Mammary epithelial cell (primary cell): ENCODE measurements at regions of chr3 and their contacts with region 1.

Region 1: GRCh38 chr3:29285471-29286071 is 4.7 kb downstream of the RBMS3 start:
- DNase-seq: peak; percentile 76
- H3K4me3 ChIP-seq: peak overlapping the region; percentile 40 to 53 (median 52)
- H3K27ac ChIP-seq: peak overlapping the region; percentile 93
- H3K4me1 ChIP-seq: peaks cover 13% of the 10 kb centered on the region
- H3K27me3 ChIP-seq: no peaks in the 10 kb centered on the region
- CTCF ChIP-seq: no peak

Region 2: DNA sequence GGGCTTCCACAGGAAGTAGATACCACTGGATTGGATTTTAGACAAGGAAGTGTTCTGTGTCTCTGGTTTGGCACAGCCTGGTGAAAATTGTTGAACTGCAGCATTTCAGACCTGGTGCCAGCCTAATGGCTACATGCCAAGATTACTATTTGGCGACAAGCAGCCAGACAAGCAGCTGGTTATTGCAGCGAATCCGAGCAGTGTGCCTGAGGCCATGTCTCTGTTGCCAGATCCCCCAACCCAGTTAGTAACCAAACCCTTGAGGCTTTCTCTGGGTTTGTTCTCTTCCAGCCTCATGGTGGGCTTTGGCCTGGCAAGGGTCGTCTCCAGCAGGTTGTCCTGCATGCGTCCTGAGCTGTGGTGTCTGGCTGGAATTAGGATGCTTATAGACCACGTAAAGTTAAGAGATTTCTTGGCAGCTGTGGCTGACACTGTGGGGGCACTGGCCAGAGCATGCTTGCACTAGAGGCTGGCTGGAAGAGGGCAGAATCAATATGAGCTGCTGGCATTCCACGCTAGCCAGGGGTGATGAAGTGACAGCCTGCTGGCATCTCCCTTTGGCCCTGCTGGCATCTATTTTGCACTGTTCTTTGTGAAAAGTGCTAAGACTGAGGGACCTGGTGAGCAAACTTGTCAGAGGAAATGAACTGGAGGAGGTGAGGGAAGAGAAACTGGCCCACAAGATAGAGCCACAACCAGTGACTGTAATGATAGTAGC is 167.9 kb after region 1 on chr3:
- CTCF ChIA-PET with region 1: no interaction called
- dilution Hi-C with region 1: no loop called
- in situ Hi-C with region 1: loop called in 1 of 2 experiments (anchors 25 kb)
- intact Hi-C with region 1: loop called (anchors 5 kb)
- DNase-seq: peak; percentile 26
- H3K4me3 ChIP-seq: no peak overlapping the region
- H3K27ac ChIP-seq: peak overlapping the region; percentile 91
- H3K4me1 ChIP-seq: peaks cover 36% of the 10 kb centered on the region
- H3K27me3 ChIP-seq: no peaks in the 10 kb centered on the region
- CTCF ChIP-seq: no peak